A549 (cell line): ENCODE measurements at regions of chr9 and their contacts with region 1.

Region 1: GRCh38 chr9:26892251-26893029 is at the start of gene CAAP1:
- DNase-seq: peak; percentile 88 to 95
- ATAC-seq: peak; percentile 96
- H3K4me3 ChIP-seq: peak within 1 kb of the TSS; percentile 78
- H3K27ac ChIP-seq: peak within 1 kb of the TSS; percentile 96
- H3K4me1 ChIP-seq: peaks cover 12% of the 10 kb centered on the region
- CTCF ChIP-seq: peak; percentile 33; the same call in 1 of the 3 replicates
- EP300 ChIP-seq: no peak
- POLR2A ChIP-seq: peak; percentile 93
- RAD21 ChIP-seq: peak; percentile 17 to 38; a peak in 4 of 5 replicates
- polyA plus RNA-seq, gene CAAP1: 22.4 and 32.8 TPM in 2 replicates

Region 2: GRCh38 chr9:26656003-26656870 is 236.2 kb before region 1 on chr9:
- CTCF ChIA-PET with region 1: no interaction called
- POLR2A ChIA-PET with region 1: no interaction called
- DNase-seq: peak; percentile 36 to 37
- ATAC-seq: peak; percentile 87 to 89
- H3K4me3 ChIP-seq: no peak overlapping the region
- H3K27ac ChIP-seq: no peak overlapping the region
- H3K4me1 ChIP-seq: no peaks in the 10 kb centered on the region
- CTCF ChIP-seq: peak; percentile 47; the same call in 2 of the 3 replicates
- EP300 ChIP-seq: no peak
- POLR2A ChIP-seq: no peak
- RAD21 ChIP-seq: peak; percentile 51 to 53

Region 3: GRCh38 chr9:26946753-26947727 is 54.6 kb after region 1 on chr9 and contains the start of gene PLAA:
- CTCF ChIA-PET with region 1: interaction called, 6 read pairs
- POLR2A ChIA-PET with region 1: interaction called, 15 read pairs
- DNase-seq: peak; percentile 91 to 94
- ATAC-seq: peak; percentile 99
- H3K4me3 ChIP-seq: peak within 1 kb of the TSS; percentile 79
- H3K27ac ChIP-seq: peak within 1 kb of the TSS; percentile 96 to 100
- H3K4me1 ChIP-seq: peaks cover 17% of the 10 kb centered on the region
- CTCF ChIP-seq: no peak
- EP300 ChIP-seq: no peak
- POLR2A ChIP-seq: no peak; the same call in none of the 2 replicates
- RAD21 ChIP-seq: no peak
- polyA plus RNA-seq, gene PLAA: 22.5 and 25.5 TPM in 2 replicates

Region 4: GRCh38 chr9:26955921-26956859 is 63.8 kb after region 1 on chr9 and contains the start of gene IFT74:
- CTCF ChIA-PET with region 1: interaction called, 8 read pairs
- POLR2A ChIA-PET with region 1: interaction called, 14 read pairs
- DNase-seq: peak; percentile 98 to 99
- ATAC-seq: peak; percentile 100
- H3K4me3 ChIP-seq: peak within 1 kb of the TSS; percentile 74
- H3K27ac ChIP-seq: peak within 1 kb of the TSS; percentile 90 to 93
- H3K4me1 ChIP-seq: peaks cover 14% of the 10 kb centered on the region; the same call in 2 of the 3 replicates
- CTCF ChIP-seq: no peak
- EP300 ChIP-seq: no peak
- POLR2A ChIP-seq: peak; percentile 76
- RAD21 ChIP-seq: no peak
- polyA plus RNA-seq, gene IFT74: 17.3 and 26.3 TPM in 2 replicates